ENCODE measurements at regions of chr2 and their contacts with region 1.

Region 1: DNA sequence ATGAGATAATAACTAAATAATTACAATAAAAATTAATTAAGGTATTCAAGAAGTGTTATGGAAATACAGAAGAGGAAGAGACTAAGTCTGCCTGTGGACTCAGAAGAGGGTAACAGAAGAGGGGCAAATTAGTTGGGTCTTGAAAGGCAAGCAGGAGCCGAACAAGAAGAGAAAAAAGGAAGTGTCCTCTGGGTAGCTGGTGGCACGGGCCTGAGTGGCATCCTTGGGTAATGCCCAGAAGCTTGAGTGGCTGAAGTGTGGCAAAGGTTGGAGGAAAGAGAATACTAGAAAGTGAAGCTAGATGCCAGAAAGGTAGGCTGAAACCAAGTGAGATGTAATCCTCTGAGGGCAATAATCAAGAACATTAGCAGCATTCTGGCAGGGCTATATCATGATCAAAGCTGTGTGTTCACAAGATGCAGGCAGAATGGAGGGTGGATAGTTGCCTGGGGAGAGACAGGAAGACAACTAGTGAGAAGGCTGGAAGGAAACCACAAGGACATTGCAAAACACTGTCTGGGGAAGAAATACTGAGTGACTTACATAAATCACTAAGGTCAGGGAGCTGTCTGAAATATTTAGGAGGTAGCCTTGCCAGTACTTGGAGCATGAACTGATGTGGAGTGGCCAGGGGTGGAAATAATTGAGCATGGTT is 16.2 kb downstream of the DOCK10 start:
- DNase-seq: no peak
- ATAC-seq: no peak
- H3K4me3 Mint-ChIP-seq: no peak overlapping the region
- H3K27ac Mint-ChIP-seq: peak overlapping the region; percentile 16
- H3K4me1 Mint-ChIP-seq: peaks cover 73% of the 10 kb centered on the region
- H3K27me3 Mint-ChIP-seq: no peaks in the 10 kb centered on the region

Region 2: DNA sequence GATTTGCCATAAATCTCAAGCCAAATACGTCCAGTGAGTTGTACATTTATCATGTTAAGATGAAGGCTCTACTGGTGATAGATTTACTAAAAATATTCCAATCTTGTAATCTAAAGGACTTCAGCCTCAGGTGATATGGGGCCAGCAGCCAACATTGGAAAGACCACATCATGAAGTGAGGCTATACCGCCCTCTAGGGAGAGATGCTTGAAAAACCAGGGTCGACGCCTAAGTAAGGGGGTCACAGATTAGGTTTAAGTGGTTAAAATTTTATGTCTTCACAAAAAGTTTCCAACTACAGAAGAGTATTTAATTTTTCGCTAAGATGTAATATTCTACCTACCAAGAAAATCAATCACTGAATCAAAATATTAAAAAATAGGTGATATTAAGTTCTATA is 17.1 kb before region 1 on chr2:
- CTCF ChIA-PET with region 1: interaction called, 5 read pairs
- POLR2A ChIA-PET with region 1: no interaction called
- intact Hi-C with region 1: loop called (anchors 1 to 2 kb)
- DNase-seq: peak; percentile 43
- ATAC-seq: no peak
- H3K4me3 Mint-ChIP-seq: no peak overlapping the region
- H3K27ac Mint-ChIP-seq: peak overlapping the region; percentile 70
- H3K4me1 Mint-ChIP-seq: peaks cover 93% of the 10 kb centered on the region
- H3K27me3 Mint-ChIP-seq: no peaks in the 10 kb centered on the region

Region 3: DNA sequence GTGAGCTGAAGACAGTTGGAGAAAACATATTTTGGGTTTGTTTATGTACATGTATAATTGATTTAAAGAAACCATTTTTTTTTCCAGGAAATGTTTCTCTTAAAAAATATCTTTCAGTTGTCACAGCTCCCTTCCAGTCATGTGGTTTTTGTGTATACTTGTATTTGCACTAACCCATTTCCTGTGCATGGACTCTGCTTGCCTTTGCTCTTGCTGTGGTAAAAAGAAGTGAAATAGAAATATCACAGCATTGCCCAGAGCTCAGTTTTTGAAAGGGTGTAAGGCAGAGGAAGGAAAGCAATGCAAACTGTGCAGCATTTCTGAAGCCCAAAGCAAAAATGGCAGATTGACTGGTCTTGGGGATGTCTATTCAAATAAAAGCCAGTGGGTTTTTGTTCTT is 26.7 kb after region 1 on chr2:
- CTCF ChIA-PET with region 1: no interaction called
- POLR2A ChIA-PET with region 1: no interaction called
- intact Hi-C with region 1: no loop called
- DNase-seq: peak; percentile 24
- ATAC-seq: peak; percentile 91
- H3K4me3 Mint-ChIP-seq: no peak overlapping the region
- H3K27ac Mint-ChIP-seq: peak overlapping the region; percentile 70
- H3K4me1 Mint-ChIP-seq: peaks cover 41% of the 10 kb centered on the region
- H3K27me3 Mint-ChIP-seq: no peaks in the 10 kb centered on the region

Measured in activated CD4-positive, alpha-beta T cell treated with anti-CD3 and anti-CD28 coated beads for 36 hours (primary cell).